Activated CD4-positive, alpha-beta memory T cell treated with anti-CD3 and anti-CD28 coated beads, Interleukin-2, amount 10 ng/mL, durations not matched to agents 7 days and 5 days (primary cell): ENCODE measurements at regions of chr3 and their contacts with region 1.

Region 1: DNA sequence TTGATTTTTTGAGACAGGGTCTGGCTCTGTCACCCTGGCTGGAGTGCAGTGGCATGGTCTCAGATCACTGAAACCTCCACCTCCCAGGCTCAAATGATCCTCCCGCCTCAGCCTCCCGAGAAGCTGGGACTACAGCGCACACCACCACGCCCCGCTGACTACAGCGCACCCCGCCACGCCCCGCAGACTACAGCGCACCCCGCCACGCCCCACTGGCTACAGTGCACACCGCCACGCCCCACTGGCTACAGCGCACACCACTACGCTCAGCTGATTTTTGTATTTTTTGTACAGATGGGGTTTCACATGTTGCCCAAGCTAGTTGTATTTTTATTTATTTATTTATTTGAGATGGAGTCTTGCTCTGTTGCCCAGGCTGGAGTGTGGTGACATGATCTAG is 35.6 kb downstream of the SLC51A start:
- DNase-seq: no peak
- H3K4me3 Mint-ChIP-seq: no peak overlapping the region
- H3K27ac Mint-ChIP-seq: no peak overlapping the region
- H3K4me1 Mint-ChIP-seq: peaks cover 23% of the 10 kb centered on the region
- H3K27me3 Mint-ChIP-seq: no peaks in the 10 kb centered on the region

Region 2: DNA sequence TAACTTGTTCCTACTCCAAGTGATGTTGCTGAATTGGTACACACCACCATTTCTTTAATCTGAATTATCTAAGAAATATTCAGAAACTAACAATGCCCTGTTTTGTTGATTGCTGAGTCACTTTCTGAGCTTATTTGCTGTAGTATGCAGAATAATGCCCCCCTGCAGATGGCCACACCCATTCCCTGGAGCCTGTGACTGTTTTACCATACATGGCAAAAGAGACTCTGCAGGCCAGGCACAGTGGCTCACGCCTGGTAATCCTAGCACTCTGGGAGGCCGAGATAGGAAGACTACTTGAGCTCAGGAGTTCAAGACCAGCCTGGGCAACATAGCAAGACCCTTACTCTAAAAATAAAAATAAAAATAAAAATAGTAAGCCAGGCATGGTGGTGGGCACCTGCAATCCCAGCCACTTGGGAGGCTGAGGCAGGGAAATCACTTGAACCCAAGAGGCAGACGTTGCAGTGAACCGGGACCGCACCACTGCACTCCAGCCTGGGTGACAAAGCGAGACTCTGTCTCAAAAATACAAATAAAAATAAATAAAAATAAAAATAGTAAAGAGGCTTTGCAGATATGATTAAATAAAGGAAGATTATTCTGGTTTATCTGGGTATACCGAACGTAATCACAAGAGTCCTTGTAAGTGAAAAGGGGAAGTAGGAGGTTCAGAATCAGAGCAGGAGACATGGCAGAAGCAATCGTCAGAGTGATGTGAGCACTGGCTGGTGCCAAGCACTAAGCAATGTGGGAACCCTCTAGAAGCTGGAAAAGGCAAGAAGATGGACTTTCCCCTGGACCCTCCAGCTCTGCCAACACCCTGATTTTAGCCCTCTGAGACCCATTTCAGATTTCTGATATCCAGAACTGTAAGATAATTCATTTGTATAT is 16.6 kb after region 1 on chr3:
- CTCF ChIA-PET with region 1: interaction called, 16 read pairs
- POLR2A ChIA-PET with region 1: interaction called, 6 read pairs
- DNase-seq: peak; percentile 43
- H3K4me3 Mint-ChIP-seq: no peak overlapping the region
- H3K27ac Mint-ChIP-seq: peak overlapping the region; percentile 72
- H3K4me1 Mint-ChIP-seq: peaks cover 45% of the 10 kb centered on the region
- H3K27me3 Mint-ChIP-seq: no peaks in the 10 kb centered on the region

Region 3: DNA sequence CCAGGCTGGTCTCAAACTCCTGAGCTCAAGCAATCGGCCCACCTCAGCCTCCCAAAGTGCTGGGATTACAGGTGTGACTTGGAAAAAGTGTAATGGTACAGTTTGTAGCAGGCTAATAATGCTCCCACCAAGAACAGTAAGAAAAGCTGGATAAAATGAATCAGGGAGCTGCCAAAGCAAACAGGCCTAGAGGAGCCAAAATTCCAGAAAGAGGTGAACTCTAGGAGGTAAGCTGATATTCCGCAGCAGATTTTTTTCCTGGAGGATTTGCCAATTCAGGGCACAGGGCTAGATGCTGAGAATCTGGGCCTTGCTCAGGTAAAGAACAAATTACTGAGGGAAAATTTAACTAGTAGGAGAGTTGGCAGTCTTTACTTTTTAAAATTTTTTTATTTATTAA is 46.6 kb after region 1 on chr3:
- CTCF ChIA-PET with region 1: no interaction called
- POLR2A ChIA-PET with region 1: no interaction called
- DNase-seq: no peak
- H3K4me3 Mint-ChIP-seq: no peak overlapping the region
- H3K27ac Mint-ChIP-seq: no peak overlapping the region
- H3K4me1 Mint-ChIP-seq: peaks cover 18% of the 10 kb centered on the region
- H3K27me3 Mint-ChIP-seq: no peaks in the 10 kb centered on the region